Activated T-helper 2 cell treated with anti-CD3 and anti-CD28 coated beads, Interferon-gamma antibody, Interleukin-2, Interleukin-4, amounts not matched to agents 10 μg/mL and 5 μg/mL and 100 μg/mL, durations not matched to agents 14 hours and 24 hours and 36 hours (primary cell): ENCODE measurements at regions of chr13 and their contacts with region 1.

Region 1: DNA sequence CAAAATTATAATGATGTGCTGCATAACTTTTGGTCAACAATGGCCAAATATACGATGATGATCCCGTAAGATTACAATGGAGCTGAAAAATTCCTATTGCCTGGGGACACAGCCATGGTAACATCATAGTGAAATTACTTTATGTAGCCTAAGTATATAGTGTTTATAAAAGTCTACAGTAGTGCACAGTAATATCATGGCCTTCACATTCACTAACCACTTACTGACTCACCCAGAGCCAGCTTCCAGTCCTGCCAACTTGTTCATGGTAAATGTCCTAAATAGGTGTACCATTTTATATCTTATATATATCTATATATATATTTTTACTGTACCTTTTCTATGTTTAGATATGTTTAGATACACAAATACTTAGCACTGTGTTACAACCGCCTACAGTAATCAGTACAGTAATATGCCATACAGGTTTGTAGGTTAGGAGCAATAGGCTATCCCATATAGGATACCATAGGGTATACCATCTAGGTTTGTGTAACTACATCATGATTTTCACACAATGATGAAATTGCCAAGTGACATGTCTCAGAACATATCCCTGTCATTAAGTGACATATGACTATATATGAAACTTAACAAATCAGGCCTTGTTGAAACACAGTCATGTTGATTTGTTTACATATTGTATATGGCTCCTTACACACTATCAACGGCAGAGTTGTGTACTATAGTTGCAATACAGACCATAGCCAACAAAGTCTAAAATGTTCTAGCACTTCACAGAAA is 23.7 kb downstream of the DIS3 start:
- DNase-seq: no peak
- H3K4me3 Mint-ChIP-seq: no peak overlapping the region
- H3K27ac Mint-ChIP-seq: no peak overlapping the region
- H3K4me1 Mint-ChIP-seq: peaks cover 2% of the 10 kb centered on the region
- H3K27me3 Mint-ChIP-seq: no peaks in the 10 kb centered on the region

Region 2: DNA sequence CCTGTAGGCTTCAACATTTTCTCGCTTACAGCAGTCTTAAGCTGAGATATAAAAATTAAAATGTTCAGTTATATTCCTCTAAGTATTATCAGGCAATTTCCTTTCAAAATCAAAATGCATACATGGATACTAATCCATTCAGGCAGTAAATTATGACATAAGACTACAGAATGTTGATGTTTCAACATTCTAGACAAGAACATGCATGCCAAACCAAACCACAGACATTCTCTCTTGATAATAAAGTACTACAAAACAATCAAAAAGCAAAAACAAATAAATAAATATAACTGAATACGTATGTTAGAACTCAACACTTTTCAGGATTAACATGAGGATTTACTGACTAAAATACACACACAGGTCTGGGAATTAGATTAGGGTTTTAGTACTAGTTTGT is 16.1 kb after region 1 on chr13:
- intact Hi-C with region 1: loop called (anchors 2 kb)
- DNase-seq: no peak
- H3K4me3 Mint-ChIP-seq: no peak overlapping the region
- H3K27ac Mint-ChIP-seq: no peak overlapping the region
- H3K4me1 Mint-ChIP-seq: peaks cover 20% of the 10 kb centered on the region
- H3K27me3 Mint-ChIP-seq: no peaks in the 10 kb centered on the region